K562 (cell line): ENCODE measurements at regions of chr6 and their contacts with region 1.

Region 1: GRCh38 chr6:158972241-158973233 is 27.5 kb downstream of the RSPH3 start:
- DNase-seq: peak; percentile 49 to 71 (median 52)
- ATAC-seq: peak; percentile 83
- H3K4me3 ChIP-seq: no peak overlapping the region
- H3K27ac ChIP-seq: no peak overlapping the region
- H3K4me1 ChIP-seq: no peaks in the 10 kb centered on the region
- H3K27me3 ChIP-seq: no peaks in the 10 kb centered on the region
- CTCF ChIP-seq: peak; percentile 41 to 86 (median 51); a peak in 4 of 6 replicates
- EP300 ChIP-seq: no peak
- POLR2A ChIP-seq: no peak
- RAD21 ChIP-seq: peak; percentile 98

Region 2: DNA sequence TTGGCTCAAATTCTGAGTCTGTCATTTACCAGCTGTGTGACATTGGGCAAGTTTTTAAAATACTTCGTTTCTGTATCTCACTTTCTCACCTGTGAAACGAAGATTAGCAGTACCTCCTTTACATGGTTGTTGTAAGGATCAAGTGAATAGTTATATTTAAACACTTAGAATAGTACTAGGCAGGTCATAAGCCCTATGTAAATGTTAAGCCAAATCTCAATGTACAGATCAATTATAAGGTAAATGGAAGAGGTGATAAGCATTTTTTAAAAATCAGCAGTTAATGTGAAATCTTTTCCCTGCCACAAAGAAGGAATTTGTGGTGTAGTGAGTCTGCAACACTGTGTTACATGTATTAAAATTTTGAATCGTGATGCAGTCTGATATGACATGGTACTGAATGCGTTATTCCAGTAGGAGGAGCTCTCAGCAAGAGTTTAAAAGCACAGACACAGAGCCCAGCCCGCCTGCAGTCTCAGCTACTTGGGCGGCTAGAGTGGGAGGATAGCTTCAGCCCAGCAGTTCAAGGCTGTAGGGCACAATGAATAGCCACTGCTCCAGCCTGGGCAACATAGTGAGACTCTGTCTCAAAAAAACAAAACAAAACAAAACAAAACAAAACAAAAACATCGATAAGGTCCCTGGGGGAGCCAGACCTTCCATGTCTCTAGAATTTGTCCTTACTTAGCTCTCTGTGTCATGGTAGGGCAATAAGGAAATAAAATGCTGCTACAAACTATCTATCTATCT is 758.4 kb before region 1 on chr6:
- CTCF ChIA-PET with region 1: interaction called, 8 read pairs
- POLR2A ChIA-PET with region 1: no interaction called
- in situ Hi-C with region 1: loop called (anchors 10 kb)
- intact Hi-C with region 1: no loop called
- DNase-seq: peak; percentile 56 to 87 (median 64)
- ATAC-seq: peak; percentile 100
- H3K4me3 ChIP-seq: no peak overlapping the region
- H3K27ac ChIP-seq: no peak overlapping the region
- H3K4me1 ChIP-seq: peaks cover 3% of the 10 kb centered on the region in 2 experiments; a peak in 2 of 5 replicates
- H3K27me3 ChIP-seq: no peaks in the 10 kb centered on the region
- CTCF ChIP-seq: peak; percentile 84 to 94 (median 89)
- EP300 ChIP-seq: no peak
- POLR2A ChIP-seq: no peak
- RAD21 ChIP-seq: peak; percentile 84 to 95

Region 3: GRCh38 chr6:158220786-158221442 is 751.6 kb before region 1 on chr6:
- CTCF ChIA-PET with region 1: interaction called, 11 read pairs
- POLR2A ChIA-PET with region 1: no interaction called
- in situ Hi-C with region 1: loop called (anchors 10 kb)
- intact Hi-C with region 1: loop called (anchors 5 kb)
- DNase-seq: peak; percentile 87 to 94 (median 89)
- ATAC-seq: peak; percentile 99
- H3K4me3 ChIP-seq: no peak overlapping the region
- H3K27ac ChIP-seq: no peak overlapping the region
- H3K4me1 ChIP-seq: no peaks in the 10 kb centered on the region; a peak in 1 of 5 replicates
- H3K27me3 ChIP-seq: no peaks in the 10 kb centered on the region
- CTCF ChIP-seq: peak; percentile 93 to 98 (median 95)
- EP300 ChIP-seq: no peak; the same call in 1 of the 2 replicates
- POLR2A ChIP-seq: no peak
- RAD21 ChIP-seq: peak; percentile 98 to 99

Region 4: DNA sequence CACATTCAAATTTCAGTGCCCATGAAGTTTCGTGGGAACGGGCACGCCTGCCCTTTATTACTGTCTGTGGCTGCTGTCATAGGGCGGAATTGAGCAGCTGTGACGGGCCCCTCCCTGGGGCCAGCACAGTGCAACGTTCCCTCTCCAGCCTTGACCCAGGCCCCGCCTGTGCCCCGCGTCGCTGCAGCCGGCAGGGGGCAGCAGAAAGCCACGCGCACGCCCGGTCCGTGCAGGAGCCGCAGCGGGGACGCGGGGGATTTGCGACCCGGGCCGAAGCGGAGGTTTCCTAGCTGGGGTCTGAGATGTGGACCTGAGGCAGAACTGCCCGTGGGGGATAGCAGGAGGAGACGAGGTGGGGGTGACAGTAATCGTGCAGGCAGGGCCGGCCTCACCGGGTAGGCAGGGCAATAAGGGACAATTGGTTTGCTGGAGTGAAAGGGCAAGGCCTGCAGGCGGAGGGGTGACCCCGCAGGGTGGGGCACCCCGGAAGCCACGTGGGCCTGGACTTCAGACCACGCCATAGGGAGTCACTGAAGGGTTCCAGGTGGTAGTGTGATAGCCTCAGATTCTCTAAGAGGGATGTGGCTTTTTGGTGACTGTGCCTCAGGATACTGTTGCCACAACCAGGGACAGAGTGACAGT is 268.2 kb before region 1 on chr6:
- CTCF ChIA-PET with region 1: interaction called, 49 read pairs
- POLR2A ChIA-PET with region 1: interaction called, 3 read pairs
- in situ Hi-C with region 1: loop called (anchors 25 kb)
- intact Hi-C with region 1: loop called (anchors 1 kb)
- DNase-seq: peak; percentile 92 to 95 (median 94)
- ATAC-seq: peak; percentile 98
- H3K4me3 ChIP-seq: peak overlapping the region; percentile 36
- H3K27ac ChIP-seq: peak overlapping the region; percentile 45; the same call in 2 of the 3 replicates
- H3K4me1 ChIP-seq: peaks cover 26 to 35% of the 10 kb centered on the region in 2 experiments
- H3K27me3 ChIP-seq: peaks cover 0 to 15% of the 10 kb centered on the region in 2 experiments; a peak in 3 of 5 replicates
- CTCF ChIP-seq: peak; percentile 97 to 98 (median 97)
- EP300 ChIP-seq: no peak; the same call in 1 of the 2 replicates
- POLR2A ChIP-seq: no peak
- RAD21 ChIP-seq: peak; percentile 99

Region 5: GRCh38 chr6:158718461-158719046 is 254.0 kb before region 1 on chr6:
- CTCF ChIA-PET with region 1: interaction called, 7 read pairs
- POLR2A ChIA-PET with region 1: interaction called, 3 read pairs
- in situ Hi-C with region 1: loop called (anchors 25 kb)
- intact Hi-C with region 1: loop called (anchors 1 kb)
- DNase-seq: peak; percentile 66 to 77 (median 67)
- ATAC-seq: peak; percentile 90
- H3K4me3 ChIP-seq: no peak overlapping the region
- H3K27ac ChIP-seq: no peak overlapping the region
- H3K4me1 ChIP-seq: peaks cover 6 to 13% of the 10 kb centered on the region in 2 experiments; a peak in 4 of 5 replicates
- H3K27me3 ChIP-seq: peaks cover 3 to 16% of the 10 kb centered on the region in 2 experiments; a peak in 3 of 5 replicates
- CTCF ChIP-seq: peak; percentile 91 to 98 (median 97)
- EP300 ChIP-seq: no peak
- POLR2A ChIP-seq: no peak
- RAD21 ChIP-seq: peak; percentile 67 to 88

Region 6: DNA sequence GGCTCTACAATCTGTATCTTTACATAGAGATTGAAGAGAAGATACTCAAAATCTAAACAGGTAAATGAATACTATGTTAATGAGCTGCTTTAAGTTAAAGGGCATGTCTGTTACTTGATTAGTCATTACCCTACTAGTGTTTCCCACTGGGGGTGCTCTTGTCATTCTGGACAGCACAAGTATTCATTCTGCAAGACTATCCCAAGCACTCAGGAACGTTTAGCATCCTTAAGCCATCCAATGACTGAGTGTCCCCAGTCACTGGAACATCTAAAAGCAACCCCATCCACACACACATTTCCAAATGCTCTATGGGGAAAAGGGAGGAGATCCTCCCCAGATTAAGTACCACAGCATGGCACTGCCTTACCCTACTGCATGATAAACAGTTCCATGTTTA is 179.1 kb before region 1 on chr6:
- CTCF ChIA-PET with region 1: interaction called, 36 read pairs
- POLR2A ChIA-PET with region 1: interaction called, 3 read pairs
- in situ Hi-C with region 1: loop called (anchors 5 kb)
- intact Hi-C with region 1: loop called (anchors 1 kb)
- DNase-seq: peak; percentile 55 to 81 (median 66)
- ATAC-seq: peak; percentile 96
- H3K4me3 ChIP-seq: no peak overlapping the region
- H3K27ac ChIP-seq: no peak overlapping the region
- H3K4me1 ChIP-seq: no peaks in the 10 kb centered on the region
- H3K27me3 ChIP-seq: no peaks in the 10 kb centered on the region
- CTCF ChIP-seq: peak; percentile 71 to 92 (median 84)
- EP300 ChIP-seq: 0 out of 2 replicates have a peak, but pooled peaks have one; percentile 9
- POLR2A ChIP-seq: no peak
- RAD21 ChIP-seq: peak; percentile 84 to 96